A673 (cell line): ENCODE measurements at regions of chr15 and their contacts with region 1.

Region 1: GRCh38 chr15:68894208-68894607 is 36.1 kb upstream of the SPESP1 start:
- DNase-seq: no peak
- H3K4me3 ChIP-seq: no peak overlapping the region
- H3K27ac ChIP-seq: no peak overlapping the region
- H3K4me1 ChIP-seq: no peaks in the 10 kb centered on the region
- H3K27me3 ChIP-seq: no peaks in the 10 kb centered on the region
- CTCF ChIP-seq: no peak

Region 2: GRCh38 chr15:68559345-68560310 is 334.6 kb before region 1 on chr15:
- CTCF ChIA-PET with region 1: no interaction called
- POLR2A ChIA-PET with region 1: no interaction called
- intact Hi-C with region 1: no loop called
- DNase-seq: peak; percentile 93
- H3K4me3 ChIP-seq: peak overlapping the region; percentile 43
- H3K27ac ChIP-seq: peak overlapping the region; percentile 58
- H3K4me1 ChIP-seq: peaks cover 9% of the 10 kb centered on the region
- H3K27me3 ChIP-seq: no peaks in the 10 kb centered on the region
- CTCF ChIP-seq: peak; percentile 99

Region 3: DNA sequence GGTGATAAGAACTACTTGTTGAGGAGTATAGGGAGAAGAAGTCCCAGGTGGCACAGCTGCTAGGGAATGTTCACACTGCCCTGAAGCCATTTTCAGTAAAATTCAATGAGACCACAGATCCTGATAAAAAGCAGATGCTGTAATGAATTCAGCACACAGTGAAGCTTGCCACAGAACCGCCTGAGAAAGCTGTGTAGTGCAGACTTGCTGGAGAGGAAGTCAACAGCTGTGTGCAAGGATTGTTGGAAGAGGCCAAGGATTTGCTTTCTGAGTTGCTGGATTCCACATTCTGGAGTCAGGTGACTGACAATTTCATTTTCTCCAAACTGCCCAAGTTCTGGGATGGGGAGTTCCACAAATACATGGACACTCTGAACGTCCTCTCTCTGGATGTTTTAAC is 144.4 kb before region 1 on chr15:
- CTCF ChIA-PET with region 1: no interaction called
- POLR2A ChIA-PET with region 1: no interaction called
- intact Hi-C with region 1: no loop called
- DNase-seq: no peak
- H3K4me3 ChIP-seq: no peak overlapping the region
- H3K27ac ChIP-seq: no peak overlapping the region
- H3K4me1 ChIP-seq: no peaks in the 10 kb centered on the region
- H3K27me3 ChIP-seq: no peaks in the 10 kb centered on the region
- CTCF ChIP-seq: no peak

Region 4: GRCh38 chr15:68829068-68829467 is 65.1 kb before region 1 on chr15:
- CTCF ChIA-PET with region 1: no interaction called
- POLR2A ChIA-PET with region 1: interaction called, 13 read pairs
- intact Hi-C with region 1: no loop called
- DNase-seq: peak; percentile 56
- H3K4me3 ChIP-seq: no peak overlapping the region
- H3K27ac ChIP-seq: no peak overlapping the region
- H3K4me1 ChIP-seq: no peaks in the 10 kb centered on the region
- H3K27me3 ChIP-seq: no peaks in the 10 kb centered on the region
- CTCF ChIP-seq: peak; percentile 67